HepG2 (cell line): ENCODE measurements at regions of chr2 and their contacts with region 1.

Region 1: GRCh38 chr2:168220965-168221819 is 26.2 kb downstream of the STK39 start:
- DNase-seq: peak; percentile 98
- ATAC-seq: peak; percentile 91
- H3K4me3 ChIP-seq: no peak overlapping the region; a peak in 1 of 6 replicates
- H3K27ac ChIP-seq: peak overlapping the region; percentile 77
- H3K4me1 ChIP-seq: peaks cover 85% of the 10 kb centered on the region
- H3K27me3 ChIP-seq: no peaks in the 10 kb centered on the region
- CTCF ChIP-seq: no peak
- EP300 ChIP-seq: peak in 1 of 2 experiments; percentile 90; a peak in 2 of 4 replicates
- POLR2A ChIP-seq: no peak
- RAD21 ChIP-seq: no peak

Region 2: GRCh38 chr2:168166902-168167510 is 54.2 kb before region 1 on chr2:
- CTCF ChIA-PET with region 1: no interaction called
- POLR2A ChIA-PET with region 1: no interaction called
- in situ Hi-C with region 1: no loop called
- intact Hi-C with region 1: loop called (anchors 2 kb)
- DNase-seq: peak; percentile 88
- ATAC-seq: peak; percentile 91
- H3K4me3 ChIP-seq: no peak overlapping the region; a peak in 1 of 6 replicates
- H3K27ac ChIP-seq: peak overlapping the region; percentile 80
- H3K4me1 ChIP-seq: peaks cover 59% of the 10 kb centered on the region
- H3K27me3 ChIP-seq: no peaks in the 10 kb centered on the region
- CTCF ChIP-seq: no peak
- EP300 ChIP-seq: peak in 1 of 2 experiments; percentile 94; a peak in 2 of 4 replicates
- POLR2A ChIP-seq: no peak
- RAD21 ChIP-seq: no peak

Region 3: DNA sequence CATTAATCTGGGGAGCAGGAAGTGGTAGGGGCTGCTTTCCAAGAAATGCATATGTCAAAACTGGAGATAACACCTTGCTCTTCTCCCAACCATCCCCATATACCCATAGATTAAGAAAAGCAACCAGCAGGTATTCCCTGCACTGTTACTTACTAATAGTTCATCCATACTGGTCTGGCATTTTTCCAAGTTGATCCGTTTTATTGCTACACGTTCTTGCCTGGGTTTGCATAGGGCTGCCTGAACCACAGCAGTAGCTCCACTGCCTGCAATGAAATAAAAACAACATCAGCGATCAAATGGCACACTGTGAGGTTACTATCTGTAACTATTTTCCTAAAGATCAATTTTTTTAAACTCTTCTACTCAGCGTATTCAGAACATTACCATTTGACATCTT is 39.4 kb before region 1 on chr2:
- CTCF ChIA-PET with region 1: no interaction called
- POLR2A ChIA-PET with region 1: interaction called, 4 read pairs
- in situ Hi-C with region 1: no loop called
- intact Hi-C with region 1: loop called (anchors 1 kb)
- DNase-seq: no peak
- ATAC-seq: no peak
- H3K4me3 ChIP-seq: no peak overlapping the region
- H3K27ac ChIP-seq: peak overlapping the region; percentile 88
- H3K4me1 ChIP-seq: peaks cover 98% of the 10 kb centered on the region
- H3K27me3 ChIP-seq: no peaks in the 10 kb centered on the region
- CTCF ChIP-seq: no peak
- EP300 ChIP-seq: no peak
- POLR2A ChIP-seq: no peak
- RAD21 ChIP-seq: no peak

Region 4: GRCh38 chr2:168194784-168195522 is 26.2 kb before region 1 on chr2:
- CTCF ChIA-PET with region 1: no interaction called
- POLR2A ChIA-PET with region 1: interaction called, 5 read pairs
- in situ Hi-C with region 1: no loop called
- intact Hi-C with region 1: loop called (anchors 1 kb)
- DNase-seq: no peak
- ATAC-seq: no peak
- H3K4me3 ChIP-seq: no peak overlapping the region
- H3K27ac ChIP-seq: no peak overlapping the region
- H3K4me1 ChIP-seq: peaks cover 96% of the 10 kb centered on the region
- H3K27me3 ChIP-seq: no peaks in the 10 kb centered on the region
- CTCF ChIP-seq: no peak
- EP300 ChIP-seq: no peak
- POLR2A ChIP-seq: no peak
- RAD21 ChIP-seq: no peak

Region 5: GRCh38 chr2:168210895-168211570 is 10.2 kb before region 1 on chr2:
- CTCF ChIA-PET with region 1: no interaction called
- POLR2A ChIA-PET with region 1: no interaction called
- in situ Hi-C with region 1: no loop called
- intact Hi-C with region 1: loop called (anchors 1 kb)
- DNase-seq: peak; percentile 88
- ATAC-seq: peak; percentile 77
- H3K4me3 ChIP-seq: no peak overlapping the region
- H3K27ac ChIP-seq: peak overlapping the region; percentile 49
- H3K4me1 ChIP-seq: peaks cover 51% of the 10 kb centered on the region
- H3K27me3 ChIP-seq: no peaks in the 10 kb centered on the region
- CTCF ChIP-seq: no peak
- EP300 ChIP-seq: peak in 1 of 2 experiments; percentile 89; a peak in 2 of 4 replicates
- POLR2A ChIP-seq: no peak
- RAD21 ChIP-seq: no peak